T-cell (primary cell): ENCODE measurements at regions of chr4 and their contacts with region 1.

Region 1: DNA sequence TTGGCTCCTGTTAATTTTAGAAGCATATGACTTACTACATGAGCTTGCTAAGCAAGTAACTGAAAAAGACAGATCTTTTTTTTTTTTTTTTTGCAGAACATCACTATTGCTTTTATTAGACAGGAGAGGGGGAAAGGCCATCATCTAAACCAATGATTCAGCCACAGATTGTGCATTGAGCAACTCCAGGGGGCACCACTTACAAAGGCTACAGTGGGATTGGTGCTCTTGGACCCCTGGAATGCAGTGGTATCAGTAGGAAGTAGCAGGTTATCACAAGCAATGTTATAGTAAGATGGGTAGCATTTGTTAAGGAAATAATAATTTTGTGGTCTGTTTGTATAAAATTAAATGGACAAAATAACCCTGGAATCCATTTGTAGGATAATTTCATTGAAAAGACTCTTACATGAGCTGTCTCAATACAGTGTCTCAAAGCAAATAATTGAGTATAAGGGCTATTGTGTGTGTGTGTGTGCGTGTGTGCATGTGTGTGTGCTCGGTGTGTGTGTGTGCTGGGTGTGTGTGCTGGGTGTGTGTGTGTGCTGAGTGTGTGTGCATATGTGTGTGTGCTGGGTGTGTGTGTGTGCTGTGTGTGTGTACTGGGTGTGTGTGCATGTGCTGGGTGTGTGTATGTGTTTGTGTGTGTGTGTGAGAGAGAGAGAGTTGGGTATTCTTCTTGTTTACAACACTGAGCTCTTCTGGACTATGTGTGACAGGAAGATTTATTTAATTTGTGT is 296.3 kb downstream of the PCDH7 start:
- DNase-seq: no peak
- ATAC-seq: no peak
- H3K4me3 ChIP-seq: no peak overlapping the region
- H3K4me3 Mint-ChIP-seq: no peak overlapping the region
- H3K27ac ChIP-seq: no peak overlapping the region
- H3K27ac Mint-ChIP-seq: no peak overlapping the region
- H3K4me1 ChIP-seq: no peaks in the 10 kb centered on the region
- H3K4me1 Mint-ChIP-seq: no peaks in the 10 kb centered on the region
- H3K27me3 ChIP-seq: no peaks in the 10 kb centered on the region
- H3K27me3 Mint-ChIP-seq: no peaks in the 10 kb centered on the region

Region 2: GRCh38 chr4:30948653-30949052 is 67.8 kb before region 1 on chr4:
- CTCF ChIA-PET with region 1: no interaction called
- POLR2A ChIA-PET with region 1: no interaction called
- DNase-seq: no peak
- ATAC-seq: no peak
- H3K4me3 ChIP-seq: no peak overlapping the region
- H3K4me3 Mint-ChIP-seq: no peak overlapping the region
- H3K27ac ChIP-seq: no peak overlapping the region
- H3K27ac Mint-ChIP-seq: no peak overlapping the region
- H3K4me1 ChIP-seq: no peaks in the 10 kb centered on the region
- H3K4me1 Mint-ChIP-seq: no peaks in the 10 kb centered on the region
- H3K27me3 ChIP-seq: no peaks in the 10 kb centered on the region
- H3K27me3 Mint-ChIP-seq: no peaks in the 10 kb centered on the region

Region 3: GRCh38 chr4:30989508-30989907 is 27.0 kb before region 1 on chr4:
- CTCF ChIA-PET with region 1: interaction called in 1 of 2 experiments, 15 read pairs
- POLR2A ChIA-PET with region 1: no interaction called
- DNase-seq: no peak
- ATAC-seq: no peak
- H3K4me3 ChIP-seq: no peak overlapping the region
- H3K4me3 Mint-ChIP-seq: no peak overlapping the region
- H3K27ac ChIP-seq: no peak overlapping the region
- H3K27ac Mint-ChIP-seq: no peak overlapping the region
- H3K4me1 ChIP-seq: no peaks in the 10 kb centered on the region
- H3K4me1 Mint-ChIP-seq: no peaks in the 10 kb centered on the region
- H3K27me3 ChIP-seq: no peaks in the 10 kb centered on the region
- H3K27me3 Mint-ChIP-seq: no peaks in the 10 kb centered on the region